BJ (cell line): ENCODE measurements at regions of chr2 and their contacts with region 1.

Region 1: DNA sequence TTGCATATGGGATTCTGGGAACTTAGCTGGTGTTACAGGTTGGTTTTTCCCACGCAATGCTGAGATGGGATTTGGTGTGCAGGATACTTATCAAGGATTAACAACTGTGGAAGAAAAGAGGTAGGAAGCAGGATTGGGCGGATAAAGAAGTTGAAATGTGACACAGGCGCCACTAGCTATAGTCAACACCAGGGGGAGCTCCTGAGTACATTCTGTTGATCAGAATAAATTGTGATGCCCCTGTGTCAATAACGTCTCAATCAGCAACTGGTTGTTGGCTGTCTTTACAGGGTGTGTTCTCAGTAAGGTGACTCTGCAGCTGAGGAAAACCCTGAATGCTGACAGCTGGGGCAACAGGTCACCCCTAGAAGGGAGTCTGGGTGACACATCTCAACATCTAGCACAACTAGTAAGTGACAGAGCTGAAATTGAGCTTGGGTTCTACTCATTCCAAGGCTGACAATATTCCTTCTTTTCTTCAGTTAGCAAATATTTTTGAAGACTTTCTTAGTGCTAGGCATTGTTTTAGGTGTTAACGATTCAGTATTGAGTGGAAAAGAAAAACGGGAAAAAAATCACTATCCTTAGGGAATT is 143.0 kb downstream of the ARL6IP6 start:
- DNase-seq: no peak
- H3K4me3 ChIP-seq: no peak overlapping the region
- H3K27me3 ChIP-seq: no peaks in the 10 kb centered on the region
- CTCF ChIP-seq: peak; percentile 66

Region 2: DNA sequence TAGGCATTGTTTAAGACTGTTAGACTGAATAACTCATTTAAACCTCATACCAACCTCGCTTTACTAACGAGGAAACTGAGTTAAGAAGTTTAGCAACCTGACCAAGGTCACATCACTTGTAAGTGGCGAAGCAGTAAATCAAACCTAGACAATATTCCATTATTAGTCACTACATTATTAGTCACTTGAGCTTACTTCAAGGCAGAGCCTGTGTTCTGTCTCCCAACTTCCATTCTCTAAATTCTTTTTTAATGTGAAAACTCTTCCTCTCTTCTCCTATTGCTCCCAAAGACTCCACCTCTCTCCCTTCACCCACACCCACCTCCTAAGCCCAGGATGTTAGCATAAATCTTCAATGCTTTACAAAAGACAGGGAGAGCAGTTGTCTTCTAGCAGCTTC is 13.5 kb after region 1 on chr2:
- CTCF ChIA-PET with region 1: interaction called, 14 read pairs
- POLR2A ChIA-PET with region 1: no interaction called
- DNase-seq: peak; percentile 12
- H3K4me3 ChIP-seq: no peak overlapping the region
- H3K27me3 ChIP-seq: no peaks in the 10 kb centered on the region
- CTCF ChIP-seq: no peak

Region 3: GRCh38 chr2:153152036-153152435 is 290.6 kb after region 1 on chr2:
- CTCF ChIA-PET with region 1: no interaction called
- POLR2A ChIA-PET with region 1: no interaction called
- DNase-seq: no peak
- H3K4me3 ChIP-seq: no peak overlapping the region
- H3K27me3 ChIP-seq: no peaks in the 10 kb centered on the region
- CTCF ChIP-seq: no peak